B cell (primary cell): ENCODE measurements at regions of chr16 and their contacts with region 1.

Region 1: DNA sequence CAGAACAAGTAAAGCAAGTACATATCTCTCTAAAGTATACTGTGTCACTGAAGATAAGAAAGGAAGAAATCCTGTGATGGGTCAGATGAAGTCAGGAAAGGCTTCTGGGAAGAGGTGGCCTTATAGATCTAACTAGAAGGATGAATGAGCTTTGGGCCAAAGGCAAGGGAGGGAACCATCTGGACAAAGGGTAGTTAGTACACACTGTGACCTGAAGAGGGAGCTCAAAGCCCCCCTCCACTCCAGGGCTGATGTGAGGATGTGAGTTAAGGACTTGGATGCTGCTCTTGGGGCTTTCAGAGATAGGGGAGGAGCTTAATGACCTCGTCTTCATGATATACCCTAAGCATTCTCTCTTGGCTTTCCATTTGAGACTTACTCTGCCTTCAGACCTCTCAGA is 185.3 kb upstream of the CACNG3 start:
- DNase-seq: peak; percentile 74
- ATAC-seq: peak; percentile 67
- H3K4me3 ChIP-seq: no peak overlapping the region
- H3K4me3 Mint-ChIP-seq: peak overlapping the region; percentile 58
- H3K27ac ChIP-seq: peak overlapping the region; percentile 59 to 89
- H3K27ac Mint-ChIP-seq: peak overlapping the region; percentile 94
- H3K4me1 ChIP-seq: peaks cover 49 to 56% of the 10 kb centered on the region in 2 donors
- H3K4me1 Mint-ChIP-seq: peaks cover 51% of the 10 kb centered on the region
- H3K27me3 ChIP-seq: no peaks in the 10 kb centered on the region
- H3K27me3 Mint-ChIP-seq: no peaks in the 10 kb centered on the region
- CTCF ChIP-seq: peak; percentile 75

Region 2: GRCh38 chr16:23930791-23931190 is 140.1 kb before region 1 on chr16:
- CTCF ChIA-PET with region 1: no interaction called
- POLR2A ChIA-PET with region 1: no interaction called
- intact Hi-C with region 1: no loop called
- DNase-seq: no peak
- ATAC-seq: no peak
- H3K4me3 ChIP-seq: no peak overlapping the region
- H3K4me3 Mint-ChIP-seq: no peak overlapping the region
- H3K27ac ChIP-seq: peak overlapping the region in 1 of 2 donors; percentile 36
- H3K27ac Mint-ChIP-seq: peak overlapping the region; percentile 39
- H3K4me1 ChIP-seq: peaks cover 30 to 41% of the 10 kb centered on the region in 2 donors
- H3K4me1 Mint-ChIP-seq: peaks cover 83% of the 10 kb centered on the region
- H3K27me3 ChIP-seq: no peaks in the 10 kb centered on the region
- H3K27me3 Mint-ChIP-seq: no peaks in the 10 kb centered on the region
- CTCF ChIP-seq: no peak

Region 3: DNA sequence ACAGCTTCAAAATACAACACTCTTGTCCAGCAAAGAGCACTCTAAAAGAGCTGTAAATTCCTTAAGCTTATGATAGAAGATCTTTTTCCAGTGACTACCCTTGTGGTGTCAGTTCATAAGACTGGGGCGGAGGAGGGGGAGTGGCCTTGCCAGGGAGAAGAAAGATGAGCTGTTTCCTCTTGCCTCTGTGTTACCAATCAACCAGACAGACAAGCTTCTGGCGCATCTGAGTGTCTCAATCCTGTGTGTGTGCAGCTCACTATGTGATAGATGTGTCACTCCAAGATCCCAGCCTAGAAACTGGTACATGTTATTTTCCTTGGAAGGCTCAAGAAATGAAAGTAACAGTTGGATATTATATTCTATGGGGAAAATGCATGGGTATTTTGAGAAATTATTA is 17.9 kb after region 1 on chr16:
- CTCF ChIA-PET with region 1: interaction called, 13 read pairs
- POLR2A ChIA-PET with region 1: no interaction called
- intact Hi-C with region 1: no loop called
- DNase-seq: no peak
- ATAC-seq: no peak
- H3K4me3 ChIP-seq: no peak overlapping the region
- H3K4me3 Mint-ChIP-seq: no peak overlapping the region
- H3K27ac ChIP-seq: no peak overlapping the region
- H3K27ac Mint-ChIP-seq: peak overlapping the region; percentile 54
- H3K4me1 ChIP-seq: no peaks in the 10 kb centered on the region
- H3K4me1 Mint-ChIP-seq: peaks cover 22% of the 10 kb centered on the region
- H3K27me3 ChIP-seq: no peaks in the 10 kb centered on the region
- H3K27me3 Mint-ChIP-seq: no peaks in the 10 kb centered on the region
- CTCF ChIP-seq: no peak

Region 4: DNA sequence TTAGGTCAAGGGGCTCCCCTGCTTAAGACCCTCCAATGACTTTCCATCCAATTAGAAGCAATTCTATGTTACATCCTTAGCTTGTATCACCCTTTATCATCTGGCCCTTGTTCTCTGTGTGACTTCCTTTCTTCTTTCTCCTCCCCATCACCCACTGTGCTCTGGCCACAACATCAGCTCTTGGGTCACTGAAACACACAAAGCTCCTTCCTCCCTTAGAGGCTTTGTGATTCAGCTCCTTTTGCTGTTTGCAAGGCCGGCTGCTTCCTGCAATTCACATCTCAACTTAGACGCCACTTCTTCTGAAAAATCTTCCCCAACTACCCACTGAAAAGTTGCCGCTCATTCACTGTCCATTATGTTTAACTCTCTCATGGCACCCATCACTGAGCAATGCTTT is 54.4 kb after region 1 on chr16:
- CTCF ChIA-PET with region 1: interaction called, 5 read pairs
- POLR2A ChIA-PET with region 1: no interaction called
- intact Hi-C with region 1: loop called (anchors 10 kb)
- DNase-seq: no peak
- ATAC-seq: no peak
- H3K4me3 ChIP-seq: no peak overlapping the region
- H3K4me3 Mint-ChIP-seq: no peak overlapping the region
- H3K27ac ChIP-seq: no peak overlapping the region
- H3K27ac Mint-ChIP-seq: no peak overlapping the region
- H3K4me1 ChIP-seq: no peaks in the 10 kb centered on the region
- H3K4me1 Mint-ChIP-seq: no peaks in the 10 kb centered on the region
- H3K27me3 ChIP-seq: no peaks in the 10 kb centered on the region
- H3K27me3 Mint-ChIP-seq: no peaks in the 10 kb centered on the region
- CTCF ChIP-seq: no peak

Region 5: GRCh38 chr16:24174504-24174903 is 103.7 kb after region 1 on chr16:
- CTCF ChIA-PET with region 1: interaction called, 14 read pairs
- POLR2A ChIA-PET with region 1: no interaction called
- intact Hi-C with region 1: no loop called
- DNase-seq: no peak
- ATAC-seq: no peak
- H3K4me3 ChIP-seq: no peak overlapping the region
- H3K4me3 Mint-ChIP-seq: no peak overlapping the region
- H3K27ac ChIP-seq: no peak overlapping the region
- H3K27ac Mint-ChIP-seq: no peak overlapping the region
- H3K4me1 ChIP-seq: no peaks in the 10 kb centered on the region
- H3K4me1 Mint-ChIP-seq: no peaks in the 10 kb centered on the region
- H3K27me3 ChIP-seq: no peaks in the 10 kb centered on the region
- H3K27me3 Mint-ChIP-seq: no peaks in the 10 kb centered on the region
- CTCF ChIP-seq: no peak

Region 6: GRCh38 chr16:24253192-24253591 is 182.3 kb after region 1 on chr16:
- CTCF ChIA-PET with region 1: interaction called, 117 read pairs
- POLR2A ChIA-PET with region 1: no interaction called
- intact Hi-C with region 1: no loop called
- DNase-seq: peak; percentile 71
- ATAC-seq: peak; percentile 66
- H3K4me3 ChIP-seq: no peak overlapping the region
- H3K4me3 Mint-ChIP-seq: no peak overlapping the region
- H3K27ac ChIP-seq: no peak overlapping the region
- H3K27ac Mint-ChIP-seq: no peak overlapping the region
- H3K4me1 ChIP-seq: no peaks in the 10 kb centered on the region
- H3K4me1 Mint-ChIP-seq: peaks cover 6% of the 10 kb centered on the region
- H3K27me3 ChIP-seq: peaks cover 0 to 44% (median 39%) of the 10 kb centered on the region in 4 experiments
- H3K27me3 Mint-ChIP-seq: peaks cover 51% of the 10 kb centered on the region
- CTCF ChIP-seq: peak; percentile 85